ENCODE measurements at regions of chr6 and their contacts with region 1.

Region 1: DNA sequence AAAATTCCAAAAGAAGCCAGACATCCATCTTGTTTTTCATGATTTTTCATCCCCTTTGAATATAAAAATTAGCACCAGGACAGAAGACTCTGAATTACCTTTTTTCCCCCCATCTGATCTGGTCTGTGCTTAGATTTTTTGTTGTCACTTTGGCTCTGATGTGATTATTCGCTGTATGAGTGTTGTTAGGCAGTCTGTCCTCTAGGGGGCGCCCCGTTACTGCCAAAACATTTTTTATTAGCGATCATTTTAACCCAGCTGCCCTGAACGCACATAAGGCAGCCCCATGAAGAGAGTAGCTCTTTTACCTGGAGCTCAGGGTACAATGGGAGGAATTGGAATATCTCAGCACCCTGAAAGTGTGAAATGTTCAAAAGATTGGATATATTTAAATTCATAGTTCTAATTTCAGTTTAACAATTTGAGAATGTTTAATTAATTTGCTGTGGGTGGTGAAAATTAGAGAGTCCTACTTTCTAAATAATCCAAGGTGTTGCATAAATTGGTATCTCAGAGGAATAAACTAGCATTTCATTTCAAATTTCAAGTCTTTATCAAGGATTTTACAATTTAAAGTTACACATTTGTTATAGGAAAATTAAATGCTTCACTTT is 60.8 kb downstream of the PRPH2 start:
- DNase-seq: peak; percentile 9
- H3K4me3 ChIP-seq: no peak overlapping the region
- H3K27me3 ChIP-seq: no peaks in the 10 kb centered on the region
- CTCF ChIP-seq: peak; percentile 84

Region 2: GRCh38 chr6:42674780-42675179 is 13.1 kb after region 1 on chr6:
- CTCF ChIA-PET with region 1: interaction called, 10 read pairs
- POLR2A ChIA-PET with region 1: no interaction called
- DNase-seq: no peak
- H3K4me3 ChIP-seq: no peak overlapping the region
- H3K27me3 ChIP-seq: no peaks in the 10 kb centered on the region
- CTCF ChIP-seq: no peak

Region 3: DNA sequence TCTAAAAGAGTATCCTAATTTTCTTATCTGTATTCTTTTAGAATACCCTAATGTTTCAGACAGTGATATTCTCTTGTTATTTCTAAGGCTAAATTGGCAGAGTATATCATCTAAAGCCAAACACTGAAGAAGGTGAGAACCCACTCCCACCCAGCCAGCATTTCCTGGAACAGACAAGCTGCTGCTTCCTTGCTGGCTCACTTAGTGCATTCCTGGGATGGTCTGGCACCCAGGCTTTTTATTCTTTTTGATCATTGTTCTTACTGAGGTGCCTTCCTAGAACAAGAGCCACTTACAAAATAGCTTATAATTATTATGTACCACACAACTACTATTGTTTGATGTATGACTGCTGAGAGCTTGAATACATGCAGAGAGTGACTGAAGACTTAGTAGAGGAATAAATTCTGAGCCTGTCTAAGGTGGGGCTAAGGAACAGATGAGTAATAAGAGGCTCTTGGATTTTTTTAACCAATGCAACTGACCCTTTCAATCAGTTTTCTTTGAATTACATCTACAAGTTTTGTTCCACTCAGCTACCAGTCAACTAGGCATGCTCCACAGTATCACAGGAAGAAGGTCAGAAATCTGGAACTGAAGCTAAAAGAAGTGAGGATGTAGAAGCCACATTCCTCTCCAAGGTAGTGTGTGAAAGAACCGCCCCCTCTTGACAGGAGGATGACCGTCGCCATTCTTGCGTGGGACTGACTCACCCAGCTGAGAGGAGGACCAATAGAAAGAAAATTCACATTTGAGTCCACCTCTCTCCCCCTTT is 30.7 kb after region 1 on chr6:
- CTCF ChIA-PET with region 1: interaction called, 10 read pairs
- POLR2A ChIA-PET with region 1: no interaction called
- DNase-seq: no peak
- H3K4me3 ChIP-seq: no peak overlapping the region
- H3K27me3 ChIP-seq: no peaks in the 10 kb centered on the region
- CTCF ChIP-seq: no peak

Region 4: DNA sequence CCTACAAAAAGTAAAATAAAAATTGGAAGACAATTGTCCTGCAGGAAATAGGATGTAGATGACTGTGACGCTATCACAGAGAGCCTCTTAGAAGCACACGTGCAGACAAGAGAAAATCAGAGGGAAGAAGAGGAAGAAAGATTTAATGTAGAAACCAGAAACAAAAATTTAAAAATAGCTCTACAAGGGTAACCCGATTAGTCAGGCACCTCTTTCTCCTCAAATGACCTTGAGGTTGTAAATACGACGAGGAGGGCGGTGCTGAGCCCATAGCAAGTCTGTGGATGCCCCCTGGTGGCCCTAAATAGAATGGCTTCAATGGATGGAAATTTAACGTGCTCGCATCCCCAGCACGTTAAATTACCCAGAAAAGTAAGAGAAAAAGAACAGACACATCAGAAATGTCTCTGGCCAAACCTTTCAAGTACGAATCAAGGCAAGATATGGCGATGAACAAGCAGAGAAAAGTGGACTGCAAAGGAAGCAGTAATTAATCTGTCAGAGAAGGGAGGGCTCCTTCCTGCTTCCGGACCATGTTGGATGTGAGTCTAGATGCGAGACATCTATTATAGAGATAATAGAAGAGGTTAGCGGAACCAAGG is 64.9 kb after region 1 on chr6:
- CTCF ChIA-PET with region 1: interaction called, 56 read pairs
- POLR2A ChIA-PET with region 1: no interaction called
- DNase-seq: peak; percentile 38
- H3K4me3 ChIP-seq: peak overlapping the region; percentile 34
- H3K27me3 ChIP-seq: no peaks in the 10 kb centered on the region
- CTCF ChIP-seq: peak; percentile 87

Region 5: DNA sequence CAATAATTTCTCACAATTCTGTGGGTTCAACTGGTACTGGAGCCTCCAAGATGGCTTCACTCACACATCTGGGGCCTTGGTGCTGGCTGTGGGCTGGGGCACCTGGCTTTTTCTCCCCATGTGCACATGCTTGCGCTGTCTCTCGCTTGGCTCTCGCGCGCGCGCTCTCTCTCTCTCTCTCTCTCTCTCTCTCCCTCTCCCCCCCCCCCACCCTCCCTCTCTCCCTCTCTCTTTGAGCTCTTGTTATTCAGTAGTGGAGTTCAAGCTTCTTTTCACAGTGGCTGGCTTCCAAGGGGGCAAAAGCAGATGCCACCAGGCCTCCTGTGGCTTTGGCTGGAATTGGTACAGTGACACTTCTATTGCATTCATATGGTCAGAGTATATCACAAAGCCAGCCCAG is 95.1 kb after region 1 on chr6:
- CTCF ChIA-PET with region 1: no interaction called
- POLR2A ChIA-PET with region 1: no interaction called
- DNase-seq: no peak
- H3K4me3 ChIP-seq: no peak overlapping the region
- H3K27me3 ChIP-seq: no peaks in the 10 kb centered on the region
- CTCF ChIP-seq: no peak

Region 6: DNA sequence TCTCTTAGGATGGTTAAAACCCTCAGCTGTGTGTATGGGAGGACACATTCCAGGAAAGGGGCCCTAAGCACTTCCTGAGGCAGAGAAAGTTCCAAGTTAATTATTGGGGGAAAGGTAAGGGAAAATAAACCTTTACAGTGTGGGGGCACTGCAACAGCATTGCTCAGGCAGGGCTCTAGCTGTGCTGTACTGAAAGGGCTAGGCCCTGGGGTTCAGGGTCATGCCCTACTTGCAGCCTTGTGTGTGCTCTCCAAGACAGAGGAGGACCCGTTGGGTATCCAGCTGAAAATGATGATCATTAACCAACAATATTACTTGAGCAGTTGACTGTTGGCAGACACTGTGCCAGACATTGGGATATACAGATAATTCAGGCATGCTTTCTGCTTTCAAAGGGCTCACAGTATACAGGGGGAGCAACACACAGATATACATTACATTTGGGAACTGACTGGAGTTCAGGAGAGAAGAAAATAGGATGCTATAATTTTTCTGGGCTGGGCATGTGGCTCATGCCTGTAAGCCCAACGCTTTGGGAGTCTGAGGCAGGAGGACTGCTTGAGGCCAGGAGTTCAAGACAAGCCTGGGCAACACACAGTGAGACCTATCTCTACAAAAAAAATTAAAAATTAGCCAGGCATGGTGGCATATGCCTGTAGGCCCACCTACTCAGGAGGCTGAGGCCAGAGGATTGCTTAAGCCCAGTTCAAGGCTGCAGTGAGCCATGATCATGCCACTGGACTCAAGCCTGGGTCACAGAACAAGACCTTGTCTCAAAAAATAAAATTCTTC is 208.7 kb after region 1 on chr6:
- CTCF ChIA-PET with region 1: interaction called, 14 read pairs
- POLR2A ChIA-PET with region 1: no interaction called
- DNase-seq: no peak
- H3K4me3 ChIP-seq: no peak overlapping the region
- H3K27me3 ChIP-seq: no peaks in the 10 kb centered on the region
- CTCF ChIP-seq: no peak

Region 7: DNA sequence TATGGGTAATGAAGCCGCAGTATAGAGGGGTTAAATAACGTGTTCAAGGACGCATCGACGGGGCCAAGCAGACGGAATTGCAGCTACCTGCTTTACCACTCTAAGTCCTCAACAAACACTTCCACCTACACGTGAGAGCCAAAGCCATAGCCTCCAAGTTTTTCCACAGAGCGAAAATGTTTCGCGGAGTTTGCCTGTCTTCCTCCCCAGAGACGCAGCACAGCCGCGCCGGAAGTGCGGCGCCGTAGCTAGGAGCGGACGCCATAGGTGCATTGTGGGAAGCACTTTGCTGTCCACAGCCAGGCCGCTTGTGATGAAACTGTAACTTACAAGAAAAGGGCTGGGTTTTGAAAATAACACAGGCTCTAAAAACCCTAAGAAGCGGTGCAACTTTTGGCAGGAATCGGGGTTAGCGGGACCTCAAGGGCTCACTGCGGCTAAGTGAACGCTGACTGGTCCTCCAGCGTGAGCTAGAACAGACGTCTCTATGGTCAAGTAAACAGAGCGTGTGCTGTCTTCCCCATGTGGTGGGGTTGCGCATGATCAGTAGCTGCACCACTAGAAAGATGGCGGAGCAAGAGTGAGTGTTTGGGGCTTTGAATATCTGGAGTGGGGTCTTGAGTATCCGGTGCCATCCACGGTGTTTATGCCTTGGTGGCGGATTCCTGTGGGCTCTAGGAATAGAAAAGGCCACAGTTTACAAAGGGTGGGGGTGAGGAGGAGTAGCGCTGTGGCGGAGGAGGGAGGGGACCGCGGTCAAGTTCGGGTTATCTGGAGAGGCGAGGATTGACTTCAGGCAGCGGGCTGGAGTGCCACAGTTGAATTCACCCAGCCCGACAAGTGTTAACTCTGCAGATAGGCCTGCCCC is 218.0 kb after region 1 on chr6 and contains the start of gene RPL7L1:
- CTCF ChIA-PET with region 1: interaction called, 32 read pairs
- POLR2A ChIA-PET with region 1: no interaction called
- DNase-seq: peak; percentile 47
- H3K4me3 ChIP-seq: peak within 1 kb of the TSS; percentile 82
- H3K27me3 ChIP-seq: no peaks in the 10 kb centered on the region
- CTCF ChIP-seq: no peak
- polyA plus RNA-seq, gene RPL7L1: 30.2 and 44.4 TPM in 2 replicates

Region 8: GRCh38 chr6:42901536-42901957 is 239.9 kb after region 1 on chr6:
- CTCF ChIA-PET with region 1: interaction called, 14 read pairs
- POLR2A ChIA-PET with region 1: no interaction called
- DNase-seq: no peak
- H3K4me3 ChIP-seq: no peak overlapping the region
- H3K27me3 ChIP-seq: no peaks in the 10 kb centered on the region
- CTCF ChIP-seq: peak; percentile 74